Activated CD8-positive, alpha-beta T cell treated with anti-CD3 and anti-CD28 coated beads for 36 hours (primary cell): ENCODE measurements at regions of chr15 and their contacts with region 1.

Region 1: GRCh38 chr15:90869601-90870353 is 1.4 kb downstream of the FURIN start:
- DNase-seq: peak; percentile 71
- ATAC-seq: peak; percentile 61
- H3K4me3 Mint-ChIP-seq: peak overlapping the region; percentile 90
- H3K27ac Mint-ChIP-seq: peak overlapping the region; percentile 94
- H3K4me1 Mint-ChIP-seq: peaks cover 51% of the 10 kb centered on the region
- H3K27me3 Mint-ChIP-seq: peaks cover 1% of the 10 kb centered on the region
- CTCF ChIP-seq: no peak

Region 2: GRCh38 chr15:90539789-90540188 is 330.0 kb before region 1 on chr15:
- CTCF ChIA-PET with region 1: no interaction called
- POLR2A ChIA-PET with region 1: no interaction called
- intact Hi-C with region 1: no loop called
- DNase-seq: peak; percentile 43
- ATAC-seq: peak; percentile 80
- H3K4me3 Mint-ChIP-seq: peak overlapping the region; percentile 77
- H3K27ac Mint-ChIP-seq: peak overlapping the region; percentile 94
- H3K4me1 Mint-ChIP-seq: peaks cover 63% of the 10 kb centered on the region
- H3K27me3 Mint-ChIP-seq: no peaks in the 10 kb centered on the region
- CTCF ChIP-seq: no peak

Region 3: GRCh38 chr15:90839187-90840071 is 30.3 kb before region 1 on chr15:
- CTCF ChIA-PET with region 1: no interaction called
- POLR2A ChIA-PET with region 1: interaction called, 14 read pairs
- intact Hi-C with region 1: loop called (anchors 5 kb)
- DNase-seq: no peak
- ATAC-seq: no peak
- H3K4me3 Mint-ChIP-seq: peak overlapping the region; percentile 63
- H3K27ac Mint-ChIP-seq: peak overlapping the region; percentile 52
- H3K4me1 Mint-ChIP-seq: peaks cover 41% of the 10 kb centered on the region
- H3K27me3 Mint-ChIP-seq: no peaks in the 10 kb centered on the region
- CTCF ChIP-seq: no peak